ENCODE measurements at regions of chr10 and their contacts with region 1.

Region 1: GRCh38 chr10:96789571-96790108 is 42.5 kb upstream of the LCOR start:
- DNase-seq: no peak
- ATAC-seq: peak; percentile 98
- H3K4me3 Mint-ChIP-seq: peak overlapping the region; percentile 48
- H3K27ac Mint-ChIP-seq: peak overlapping the region; percentile 78
- H3K4me1 Mint-ChIP-seq: peaks cover 19% of the 10 kb centered on the region
- H3K27me3 Mint-ChIP-seq: no peaks in the 10 kb centered on the region
- CTCF ChIP-seq: no peak

Region 2: DNA sequence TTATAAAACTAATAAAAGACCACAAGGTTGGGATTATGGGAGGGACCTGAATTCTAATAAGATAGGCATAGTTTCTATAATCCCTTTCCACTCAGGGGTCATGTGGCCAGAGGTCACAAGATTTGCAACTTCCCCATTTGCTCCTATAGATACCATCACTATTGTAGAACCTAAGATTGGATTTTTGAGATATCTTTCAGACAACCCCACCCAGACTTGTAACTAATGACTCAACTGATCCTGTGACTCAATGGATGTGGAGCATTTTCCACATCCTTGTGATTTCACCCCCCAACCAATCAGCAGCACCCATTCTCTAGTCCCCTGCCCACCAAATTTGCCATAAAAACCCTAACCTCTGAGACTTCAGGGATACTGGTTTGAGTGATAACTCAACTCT is 17.4 kb before region 1 on chr10:
- CTCF ChIA-PET with region 1: interaction called, 6 read pairs
- POLR2A ChIA-PET with region 1: interaction called, 4 read pairs
- intact Hi-C with region 1: loop called (anchors 2 kb)
- DNase-seq: no peak
- ATAC-seq: no peak
- H3K4me3 Mint-ChIP-seq: no peak overlapping the region
- H3K27ac Mint-ChIP-seq: no peak overlapping the region
- H3K4me1 Mint-ChIP-seq: peaks cover 5% of the 10 kb centered on the region
- H3K27me3 Mint-ChIP-seq: no peaks in the 10 kb centered on the region
- CTCF ChIP-seq: no peak

Region 3: DNA sequence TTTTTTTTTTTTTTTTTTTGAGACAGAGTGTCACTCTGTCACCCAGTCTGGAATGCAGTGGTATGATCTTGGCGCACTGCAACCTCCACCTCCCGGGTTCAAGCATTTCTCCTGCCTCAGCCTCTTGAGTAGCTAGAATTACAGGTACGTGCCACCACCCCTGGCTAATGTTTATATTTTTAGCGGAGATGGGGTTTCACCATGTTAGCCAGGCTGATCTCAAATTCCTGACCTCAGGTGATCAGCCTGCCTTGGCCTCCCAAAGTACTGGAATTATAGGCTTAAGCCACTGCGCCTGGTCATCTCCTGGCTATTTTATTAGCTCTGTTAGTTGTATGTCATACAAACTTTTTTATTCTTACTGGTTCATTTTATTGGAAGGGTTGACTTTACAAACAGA is 145.5 kb after region 1 on chr10:
- CTCF ChIA-PET with region 1: no interaction called
- POLR2A ChIA-PET with region 1: no interaction called
- intact Hi-C with region 1: no loop called
- DNase-seq: no peak
- ATAC-seq: no peak
- H3K4me3 Mint-ChIP-seq: no peak overlapping the region
- H3K27ac Mint-ChIP-seq: no peak overlapping the region
- H3K4me1 Mint-ChIP-seq: peaks cover 14% of the 10 kb centered on the region
- H3K27me3 Mint-ChIP-seq: no peaks in the 10 kb centered on the region
- CTCF ChIP-seq: no peak